Posterior cingulate gyrus (tissue), 11 donors: ENCODE measurements at regions of chr18 and their contacts with region 1.

Region 1: DNA sequence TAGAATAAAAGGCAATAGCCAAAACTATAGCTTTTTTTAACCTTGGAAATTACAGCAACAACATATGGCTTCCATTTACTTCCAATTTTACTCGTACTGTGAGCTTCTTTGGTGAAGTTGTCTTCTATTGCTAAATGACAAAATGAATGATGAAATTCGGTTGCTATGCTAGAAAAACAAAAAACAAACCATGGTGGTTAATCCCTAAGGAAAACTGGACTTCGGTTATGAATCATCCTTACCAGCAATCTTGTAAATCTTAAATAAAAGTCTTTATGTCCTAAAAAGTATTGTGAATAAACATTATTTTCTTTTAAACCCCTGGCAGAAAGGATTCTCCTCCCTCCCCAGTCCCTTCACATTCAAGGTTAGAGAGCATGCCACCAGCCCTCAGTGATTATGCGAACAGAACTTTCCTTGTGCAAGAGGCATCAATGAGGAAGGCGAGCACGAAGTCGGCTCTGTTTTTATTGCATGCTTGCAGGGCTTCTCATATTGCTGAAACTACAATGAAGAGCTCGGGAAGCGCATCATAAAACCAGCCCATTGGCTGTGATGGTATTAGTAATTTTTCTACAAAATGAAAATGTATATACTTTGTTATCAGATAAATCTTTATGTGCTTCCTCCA is 62.9 kb downstream of the ZNF521 start:
- DNase-seq: no peak

Region 2: GRCh38 chr18:25176523-25177042 is 112.5 kb before region 1 on chr18:
- intact Hi-C with region 1: no loop called
- DNase-seq: peak in 1 of 10 donors; percentile 57

Region 3: DNA sequence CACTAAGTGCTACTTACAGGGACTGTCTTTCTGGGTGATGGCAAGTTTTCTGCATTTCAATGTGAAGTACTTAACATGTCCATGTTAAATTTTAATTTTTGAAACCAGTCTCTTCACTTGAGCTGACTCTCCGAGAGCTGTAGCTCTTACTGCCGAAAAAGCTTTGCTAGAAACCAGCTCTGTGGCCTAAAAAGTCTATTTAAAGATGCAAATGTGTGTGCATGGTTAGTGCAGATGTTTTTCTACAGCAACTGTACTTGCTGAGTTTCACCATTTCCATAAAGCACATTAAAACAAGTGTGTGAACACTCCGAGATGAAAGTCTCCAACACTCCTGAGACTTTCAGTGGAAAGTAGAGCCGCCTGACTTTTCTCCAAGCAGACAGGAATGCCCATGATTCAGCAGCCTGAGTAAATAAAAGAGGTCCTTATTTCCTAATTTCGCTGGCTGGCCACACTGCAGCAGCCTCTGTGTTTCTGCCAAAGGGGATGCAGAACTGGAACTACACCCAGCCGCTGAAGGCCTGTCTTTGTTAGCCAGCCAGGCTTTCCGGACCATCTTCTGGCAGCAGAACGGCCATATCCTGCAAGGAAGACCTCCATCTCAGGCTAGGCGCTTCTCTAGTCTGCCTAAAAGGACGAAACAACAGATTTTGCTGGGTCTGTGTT is 58.3 kb before region 1 on chr18:
- intact Hi-C with region 1: loop called (anchors 10 kb)
- DNase-seq: peak; percentile 59 to 94 (median 72)